PC-3 (cell line): ENCODE measurements at regions of chr1 and their contacts with region 1.

Region 1: DNA sequence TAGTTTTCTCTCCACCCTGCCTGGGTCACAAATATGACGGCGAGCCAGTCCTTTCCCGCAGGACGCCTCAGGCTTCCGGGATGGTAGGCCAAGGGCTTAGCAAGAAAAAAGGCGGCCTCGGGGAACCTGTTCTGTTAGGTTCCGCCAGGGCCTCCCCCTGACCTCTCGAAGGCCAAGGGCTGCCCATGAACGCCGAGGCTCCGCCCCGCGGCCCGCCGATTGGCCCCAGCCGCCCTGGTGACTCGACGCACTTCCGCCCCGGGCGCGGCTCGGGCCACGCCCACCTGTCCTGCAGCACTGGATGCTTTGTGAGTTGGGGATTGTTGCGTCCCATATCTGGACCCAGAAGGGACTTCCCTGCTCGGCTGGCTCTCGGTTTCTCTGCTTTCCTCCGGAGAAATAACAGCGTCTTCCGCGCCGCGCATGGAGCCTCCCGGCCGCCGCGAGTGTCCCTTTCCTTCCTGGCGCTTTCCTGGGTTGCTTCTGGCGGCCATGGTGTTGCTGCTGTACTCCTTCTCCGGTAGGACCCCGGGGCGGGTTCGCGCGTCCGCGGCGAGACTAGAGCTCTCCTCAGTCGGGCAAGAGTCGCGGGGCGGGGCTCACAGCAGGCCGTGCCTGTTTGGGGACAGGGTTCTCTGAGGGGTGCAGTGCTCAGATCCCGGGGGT is at the start of gene CD46:
- DNase-seq: peak; percentile 100
- ATAC-seq: peak; percentile 80
- H3K4me3 ChIP-seq: peak within 1 kb of the TSS; percentile 89
- H3K27ac ChIP-seq: peak within 1 kb of the TSS; percentile 89
- H3K4me1 ChIP-seq: peaks cover 75% of the 10 kb centered on the region
- H3K27me3 ChIP-seq: no peaks in the 10 kb centered on the region
- CTCF ChIP-seq: no peak
- total RNA-seq, gene CD46: 116 and 119 TPM in 2 replicates

Region 2: GRCh38 chr1:206120403-206120802 is 1631.5 kb before region 1 on chr1:
- CTCF ChIA-PET with region 1: no interaction called
- POLR2A ChIA-PET with region 1: no interaction called
- intact Hi-C with region 1: loop called (anchors 2 kb)
- DNase-seq: no peak
- ATAC-seq: no peak
- H3K4me3 ChIP-seq: no peak overlapping the region
- H3K27ac ChIP-seq: no peak overlapping the region
- H3K4me1 ChIP-seq: 0 out of 2 replicates have a peak, but pooled peaks cover 4% of the 10 kb centered on the region
- H3K27me3 ChIP-seq: peaks cover 25% of the 10 kb centered on the region
- CTCF ChIP-seq: no peak

Region 3: DNA sequence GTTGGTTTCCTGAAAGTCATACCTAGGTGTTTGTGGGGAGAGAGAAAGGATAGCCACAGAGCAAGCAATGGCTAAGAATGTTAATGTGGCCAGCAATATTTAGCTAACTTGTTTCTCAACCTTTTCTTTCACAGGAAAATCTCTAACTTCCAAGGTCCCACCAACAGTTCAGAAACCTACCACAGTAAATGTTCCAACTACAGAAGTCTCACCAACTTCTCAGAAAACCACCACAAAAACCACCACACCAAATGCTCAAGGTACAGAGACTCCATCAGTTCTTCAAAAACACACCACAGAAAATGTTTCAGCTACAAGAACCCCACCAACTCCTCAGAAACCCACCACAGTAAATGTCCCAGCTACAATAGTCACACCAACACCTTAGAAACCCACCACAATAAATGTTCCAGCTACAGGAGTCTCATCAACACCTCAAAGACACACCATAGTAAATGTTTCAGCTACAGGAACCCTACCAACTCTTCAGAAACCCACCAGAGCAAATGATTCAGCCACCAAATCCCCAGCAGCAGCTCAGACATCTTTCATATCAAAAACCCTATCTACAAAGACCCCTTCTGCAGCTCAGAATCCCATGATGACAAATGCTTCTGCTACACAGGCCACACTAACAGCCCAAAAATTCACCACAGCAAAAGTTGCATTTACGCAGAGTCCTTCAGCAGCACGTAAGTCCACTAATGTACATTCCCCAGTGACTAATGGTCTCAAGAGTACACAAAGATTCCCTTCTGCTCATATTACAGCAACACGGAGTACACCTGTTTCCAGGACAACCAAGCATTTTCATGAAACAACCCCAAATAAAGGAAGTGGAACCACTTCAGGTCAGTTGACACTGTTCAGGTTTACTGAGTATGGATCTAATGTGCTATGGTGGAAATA is 415.1 kb before region 1 on chr1:
- CTCF ChIA-PET with region 1: no interaction called
- POLR2A ChIA-PET with region 1: no interaction called
- intact Hi-C with region 1: loop called (anchors 10 kb)
- DNase-seq: peak; percentile 97
- ATAC-seq: peak; percentile 98
- H3K4me3 ChIP-seq: no peak overlapping the region
- H3K27ac ChIP-seq: peak overlapping the region; percentile 74
- H3K4me1 ChIP-seq: peaks cover 21% of the 10 kb centered on the region
- H3K27me3 ChIP-seq: no peaks in the 10 kb centered on the region
- CTCF ChIP-seq: no peak

Region 4: GRCh38 chr1:207698822-207699483 is 53.0 kb before region 1 on chr1:
- CTCF ChIA-PET with region 1: interaction called, 4 read pairs
- POLR2A ChIA-PET with region 1: no interaction called
- intact Hi-C with region 1: loop called (anchors 2 kb)
- DNase-seq: peak; percentile 93
- ATAC-seq: peak; percentile 96
- H3K4me3 ChIP-seq: no peak overlapping the region
- H3K27ac ChIP-seq: no peak overlapping the region
- H3K4me1 ChIP-seq: no peaks in the 10 kb centered on the region
- H3K27me3 ChIP-seq: no peaks in the 10 kb centered on the region
- CTCF ChIP-seq: peak; percentile 96

Region 5: DNA sequence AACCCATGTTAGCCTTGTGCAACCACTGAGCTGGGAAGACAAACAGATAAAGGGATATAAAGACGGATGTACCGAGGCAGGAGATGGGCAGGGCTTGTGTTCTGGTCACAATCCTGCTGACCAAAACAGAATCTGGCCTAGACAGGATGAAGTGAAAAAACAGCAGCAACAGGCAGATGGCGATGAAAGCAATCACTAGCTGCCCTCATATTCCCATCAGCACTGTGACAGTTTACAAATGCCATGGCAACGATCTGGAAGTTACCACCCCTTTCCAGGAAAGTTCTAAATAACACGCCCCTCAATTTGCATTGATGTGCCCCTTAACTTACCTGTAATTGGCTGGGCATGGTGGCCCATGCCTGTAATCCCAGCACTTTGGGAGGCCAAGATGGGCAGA is 40.6 kb before region 1 on chr1:
- CTCF ChIA-PET with region 1: no interaction called
- POLR2A ChIA-PET with region 1: no interaction called
- intact Hi-C with region 1: loop called (anchors 1 kb)
- DNase-seq: peak; percentile 69
- ATAC-seq: peak; percentile 70
- H3K4me3 ChIP-seq: no peak overlapping the region
- H3K27ac ChIP-seq: no peak overlapping the region
- H3K4me1 ChIP-seq: peaks cover 25% of the 10 kb centered on the region
- H3K27me3 ChIP-seq: no peaks in the 10 kb centered on the region
- CTCF ChIP-seq: peak; percentile 55

Region 6: GRCh38 chr1:207885129-207886032 is 133.5 kb after region 1 on chr1:
- CTCF ChIA-PET with region 1: no interaction called
- POLR2A ChIA-PET with region 1: no interaction called
- intact Hi-C with region 1: no loop called
- DNase-seq: peak; percentile 90
- ATAC-seq: peak; percentile 99
- H3K4me3 ChIP-seq: no peak overlapping the region
- H3K27ac ChIP-seq: no peak overlapping the region
- H3K4me1 ChIP-seq: peaks cover 10% of the 10 kb centered on the region; the same call in 1 of the 2 replicates
- H3K27me3 ChIP-seq: no peaks in the 10 kb centered on the region
- CTCF ChIP-seq: peak; percentile 98